ENCODE measurements at regions of chr4 and their contacts with region 1.

Region 1: DNA sequence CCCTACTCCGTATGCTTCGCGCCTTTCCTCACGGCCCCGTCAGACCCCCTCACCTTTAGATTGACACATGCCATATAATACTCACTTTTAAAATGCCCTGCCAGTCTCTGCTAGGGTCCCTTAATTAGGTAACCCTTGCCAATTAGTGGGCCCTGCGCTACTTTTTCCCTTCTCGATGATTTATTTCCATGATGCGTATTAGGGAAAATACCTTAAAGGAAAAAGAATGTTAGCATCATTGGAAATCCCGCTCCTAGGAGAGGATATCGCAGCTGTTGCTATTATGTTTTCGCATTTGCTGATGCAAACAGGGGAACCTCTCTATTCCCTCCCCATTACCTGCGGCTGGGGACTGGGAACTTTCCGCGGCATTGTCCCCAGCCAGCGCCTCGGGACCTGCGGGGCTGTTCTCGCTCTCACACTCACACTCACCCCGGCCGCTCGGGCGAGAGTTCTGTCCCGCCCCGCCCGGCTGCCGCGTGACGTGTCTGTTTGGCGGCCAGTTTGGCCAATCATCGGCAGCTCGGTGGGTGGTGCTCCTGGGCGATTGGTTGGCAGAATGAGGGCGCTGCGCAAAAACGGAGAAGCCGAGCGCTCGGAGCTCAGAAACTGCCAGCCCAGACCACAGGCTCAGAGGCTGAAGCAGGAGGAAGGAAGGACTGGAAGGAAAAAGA is at the start of gene PCDH10:
- DNase-seq: peak; percentile 85
- ATAC-seq: peak; percentile 86
- H3K4me3 ChIP-seq: peak within 1 kb of the TSS; percentile 72
- H3K27ac ChIP-seq: no peak within 1 kb of the TSS
- H3K4me1 ChIP-seq: no peaks in the 10 kb centered on the region
- H3K27me3 ChIP-seq: no peaks in the 10 kb centered on the region
- CTCF ChIP-seq: no peak
- total RNA-seq, gene PCDH10: 0.11 and 0.23 TPM in 2 replicates

Region 2: DNA sequence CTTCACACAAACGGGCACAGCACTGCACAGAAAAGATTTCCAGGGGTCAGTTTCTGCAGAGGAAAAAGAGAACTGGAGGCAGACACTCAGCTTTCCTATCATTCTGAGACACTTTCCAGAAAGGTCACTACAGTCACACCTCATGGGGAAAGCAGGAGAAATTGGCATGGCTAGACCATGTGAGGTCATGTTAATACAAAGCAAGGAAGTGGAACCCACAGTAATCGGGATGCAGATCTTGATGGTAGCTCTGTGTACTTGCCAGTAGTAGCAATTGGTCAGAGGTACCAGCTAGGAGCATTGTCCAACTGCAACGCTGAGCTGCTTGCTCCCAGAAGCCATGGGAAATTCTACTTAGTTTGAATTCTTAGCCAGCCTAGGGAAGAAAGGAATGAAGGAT is 255.0 kb before region 1 on chr4:
- CTCF ChIA-PET with region 1: no interaction called
- POLR2A ChIA-PET with region 1: no interaction called
- intact Hi-C with region 1: no loop called
- DNase-seq: no peak
- ATAC-seq: no peak
- H3K4me3 ChIP-seq: no peak overlapping the region
- H3K27ac ChIP-seq: no peak overlapping the region
- H3K4me1 ChIP-seq: no peaks in the 10 kb centered on the region
- H3K27me3 ChIP-seq: no peaks in the 10 kb centered on the region
- CTCF ChIP-seq: no peak

Region 3: GRCh38 chr4:133058701-133059100 is 90.1 kb before region 1 on chr4:
- CTCF ChIA-PET with region 1: no interaction called
- POLR2A ChIA-PET with region 1: no interaction called
- intact Hi-C with region 1: no loop called
- DNase-seq: no peak
- ATAC-seq: peak; percentile 40
- H3K4me3 ChIP-seq: no peak overlapping the region
- H3K27ac ChIP-seq: no peak overlapping the region
- H3K4me1 ChIP-seq: no peaks in the 10 kb centered on the region
- H3K27me3 ChIP-seq: no peaks in the 10 kb centered on the region
- CTCF ChIP-seq: no peak

Region 4: DNA sequence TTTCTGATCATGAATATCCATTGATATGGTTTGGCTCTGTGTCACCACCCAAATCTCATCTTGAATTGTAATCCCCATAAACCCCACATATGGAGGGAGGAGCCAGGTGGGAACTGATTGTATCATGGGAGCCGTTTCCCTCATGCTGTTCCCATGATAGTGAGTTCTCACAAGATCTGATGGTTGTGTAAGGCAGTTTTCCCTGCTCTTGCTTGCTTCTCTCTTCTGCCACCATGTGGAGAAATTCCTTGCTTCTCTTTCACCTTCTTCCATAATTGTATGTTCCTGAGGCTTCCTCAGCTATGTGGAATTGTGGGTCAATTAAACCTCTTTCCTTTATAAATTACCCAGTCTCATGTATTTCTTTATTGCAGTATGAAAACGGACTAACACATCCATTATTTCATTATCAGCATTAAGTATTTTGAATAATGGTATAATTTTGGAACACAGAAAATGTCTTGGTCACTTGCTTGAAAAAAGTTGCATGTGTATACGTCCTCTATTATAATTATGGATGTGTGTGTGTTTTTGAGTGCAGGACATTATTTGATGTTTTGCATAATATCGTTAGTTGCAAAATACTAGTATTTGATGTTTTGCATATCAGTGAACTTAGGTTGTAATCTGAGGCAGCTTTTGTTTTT is 334.9 kb after region 1 on chr4:
- CTCF ChIA-PET with region 1: interaction called, 3 read pairs
- POLR2A ChIA-PET with region 1: no interaction called
- intact Hi-C with region 1: loop called (anchors 1 kb)
- DNase-seq: peak; percentile 45
- ATAC-seq: peak; percentile 78
- H3K4me3 ChIP-seq: no peak overlapping the region
- H3K27ac ChIP-seq: no peak overlapping the region
- H3K4me1 ChIP-seq: no peaks in the 10 kb centered on the region
- H3K27me3 ChIP-seq: no peaks in the 10 kb centered on the region
- CTCF ChIP-seq: peak; percentile 55

Region 5: GRCh38 chr4:134201216-134202098 is 1052.6 kb after region 1 on chr4 and contains the start of gene PABPC4L:
- CTCF ChIA-PET with region 1: interaction called, 3 read pairs
- POLR2A ChIA-PET with region 1: no interaction called
- intact Hi-C with region 1: loop called (anchors 5 kb)
- DNase-seq: peak; percentile 72
- ATAC-seq: peak; percentile 85
- H3K4me3 ChIP-seq: peak within 1 kb of the TSS; percentile 71
- H3K27ac ChIP-seq: peak within 1 kb of the TSS; percentile 57
- H3K4me1 ChIP-seq: peaks cover 6% of the 10 kb centered on the region
- H3K27me3 ChIP-seq: no peaks in the 10 kb centered on the region
- CTCF ChIP-seq: no peak
- total RNA-seq, gene PABPC4L: 0.47 and 1.2 TPM in 2 replicates

Region 6: DNA sequence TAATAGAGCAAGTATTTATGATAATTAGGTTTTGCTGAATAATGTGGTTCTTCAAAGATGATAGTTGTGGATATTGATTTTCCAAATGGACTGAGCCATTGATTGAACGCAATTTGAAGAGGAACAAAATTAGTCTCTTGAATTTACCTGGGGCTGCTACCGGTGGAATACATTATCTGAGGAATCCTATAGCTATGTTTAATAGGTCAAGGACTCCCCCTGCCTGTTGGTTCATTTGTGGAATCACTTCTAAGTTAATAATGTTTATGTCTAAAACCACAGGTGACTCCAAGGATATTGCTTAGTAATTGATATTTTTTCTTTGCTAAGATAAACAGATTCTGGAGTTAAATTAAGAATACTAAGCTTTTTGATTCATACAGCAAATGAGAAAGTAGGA is 1628.8 kb after region 1 on chr4:
- CTCF ChIA-PET with region 1: interaction called, 5 read pairs
- POLR2A ChIA-PET with region 1: no interaction called
- intact Hi-C with region 1: loop called (anchors 5 kb)
- DNase-seq: peak; percentile 15
- ATAC-seq: peak; percentile 38; the same call in 1 of the 2 replicates
- H3K4me3 ChIP-seq: no peak overlapping the region
- H3K27ac ChIP-seq: no peak overlapping the region
- H3K4me1 ChIP-seq: no peaks in the 10 kb centered on the region
- H3K27me3 ChIP-seq: no peaks in the 10 kb centered on the region
- CTCF ChIP-seq: peak; percentile 40; the same call in 1 of the 2 replicates